ENCODE measurements at regions of chr3 and their contacts with region 1.

Region 1: GRCh38 chr3:71710906-71711494 is 14.2 kb downstream of the EIF4E3 start:
- DNase-seq: no peak
- ATAC-seq: peak; percentile 55 to 82 (median 74)
- H3K4me3 ChIP-seq: no peak overlapping the region
- H3K27ac ChIP-seq: no peak overlapping the region
- H3K4me1 ChIP-seq: peaks cover 6 to 32% (median 17%) of the 10 kb centered on the region in 3 donors
- H3K27me3 ChIP-seq: no peaks in the 10 kb centered on the region
- CTCF ChIP-seq: peak in 3 of 4 donors; percentile 37 to 62 (median 47)

Region 2: DNA sequence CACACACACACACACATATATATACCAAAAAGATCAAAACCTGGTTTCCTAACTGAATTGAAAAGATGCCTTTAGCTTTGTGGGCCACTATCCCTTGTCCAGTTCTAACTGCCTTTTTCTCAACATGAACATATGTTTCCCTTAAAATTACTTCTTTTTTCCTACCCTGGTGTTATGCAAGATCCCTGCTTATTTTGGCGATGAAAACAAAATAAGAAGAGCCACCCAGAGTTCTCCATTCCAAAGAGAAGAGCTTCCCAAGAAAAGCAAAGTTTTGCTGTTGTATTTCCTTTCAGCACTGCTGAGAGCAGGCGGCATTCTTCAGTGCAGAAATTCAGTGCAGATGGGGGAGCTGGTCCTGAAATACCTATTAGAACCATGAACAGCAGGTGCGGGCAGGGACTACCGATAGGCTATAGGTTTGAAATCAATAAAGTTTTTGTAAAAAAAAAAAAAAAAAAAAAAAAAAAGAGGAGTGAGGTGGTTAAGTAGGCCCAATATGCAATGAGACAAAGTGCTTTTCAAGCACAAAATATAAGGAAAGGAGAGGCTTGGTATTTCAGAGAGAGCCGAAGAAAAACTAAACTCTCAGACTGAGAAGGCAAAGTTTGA is 365.5 kb before region 1 on chr3:
- intact Hi-C with region 1: no loop called
- DNase-seq: no peak
- ATAC-seq: peak in 1 of 4 donors; percentile 20
- H3K4me3 ChIP-seq: no peak overlapping the region
- H3K27ac ChIP-seq: no peak overlapping the region
- H3K4me1 ChIP-seq: no peaks in the 10 kb centered on the region
- H3K27me3 ChIP-seq: no peaks in the 10 kb centered on the region
- CTCF ChIP-seq: no peak

Region 3: DNA sequence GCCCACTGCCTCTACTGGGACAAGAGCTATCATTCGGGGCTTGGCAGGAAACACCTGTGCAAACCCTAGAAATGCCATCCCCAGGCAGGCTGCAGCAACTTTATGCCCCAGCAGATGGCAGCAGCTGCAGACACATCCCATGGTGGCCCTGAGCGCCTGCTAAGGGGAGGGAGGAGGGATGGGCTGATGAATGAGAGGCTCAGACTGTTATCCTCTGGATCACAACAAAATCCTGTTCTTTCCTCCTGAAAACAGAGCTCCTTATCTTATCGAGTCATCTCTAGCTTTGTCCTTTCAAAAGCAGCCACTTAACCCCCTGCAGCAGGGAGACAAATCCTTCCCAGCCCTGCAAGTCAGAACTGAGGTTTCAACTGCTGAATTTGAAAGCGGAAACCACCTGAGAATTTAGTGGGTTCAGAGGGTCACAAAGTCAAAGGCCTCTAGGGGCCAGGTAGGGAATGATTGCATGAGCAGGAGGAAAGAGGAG is 164.5 kb after region 1 on chr3:
- intact Hi-C with region 1: loop called in 1 of 3 experiments (anchors 10 kb)
- DNase-seq: peak; percentile 52 to 90 (median 76)
- ATAC-seq: peak; percentile 86 to 100 (median 100)
- H3K4me3 ChIP-seq: no peak overlapping the region
- H3K27ac ChIP-seq: no peak overlapping the region
- H3K4me1 ChIP-seq: no peaks in the 10 kb centered on the region
- H3K27me3 ChIP-seq: no peaks in the 10 kb centered on the region
- CTCF ChIP-seq: peak; percentile 67 to 78 (median 76)